Endothelial cell of umbilical vein (primary cell): ENCODE measurements at regions of chr3 and their contacts with region 1.

Region 1: GRCh38 chr3:159260049-159260662 is 458.3 kb downstream of the MFSD1 start:
- DNase-seq: peak; percentile 65
- H3K4me3 ChIP-seq: no peak overlapping the region
- H3K27ac ChIP-seq: no peak overlapping the region
- H3K4me1 ChIP-seq: no peaks in the 10 kb centered on the region
- H3K27me3 ChIP-seq: peaks cover 2 to 21% of the 10 kb centered on the region in 2 experiments
- CTCF ChIP-seq: peak; percentile 42 to 43
- POLR2A ChIP-seq: no peak

Region 2: DNA sequence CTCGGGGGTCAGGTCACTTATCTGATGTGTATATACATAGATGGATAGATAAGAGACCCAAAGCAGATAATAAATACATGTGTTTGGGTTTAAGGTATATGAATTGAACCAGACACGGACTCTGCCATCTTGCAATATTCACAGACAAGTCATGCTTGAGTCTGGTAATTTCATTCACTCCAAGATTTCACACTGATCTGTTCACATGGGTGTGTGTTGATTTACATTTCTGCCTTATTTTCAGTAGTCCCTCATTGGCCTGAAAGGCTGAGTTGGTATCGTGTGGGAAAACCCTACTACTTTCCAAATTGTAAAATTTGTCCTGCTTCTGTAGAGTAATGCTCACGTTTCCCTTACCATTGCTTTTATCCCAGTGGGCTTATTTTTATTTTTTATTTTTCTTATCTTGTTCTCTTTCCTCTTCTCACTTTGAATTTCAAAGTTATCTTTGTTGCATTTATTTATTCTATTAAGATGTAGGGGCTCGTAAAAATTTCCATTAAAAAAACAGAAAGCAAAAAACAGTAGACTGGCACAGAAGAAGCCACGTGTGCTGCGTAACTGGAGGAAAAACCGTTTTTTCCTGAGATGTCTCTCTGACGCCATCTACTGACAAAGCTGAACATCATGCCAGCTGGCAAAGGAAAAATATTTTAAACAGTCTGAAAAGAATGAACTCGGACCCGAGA is 469.1 kb before region 1 on chr3:
- CTCF ChIA-PET with region 1: interaction called, 96 read pairs
- POLR2A ChIA-PET with region 1: no interaction called
- dilution Hi-C with region 1: no loop called
- intact Hi-C with region 1: loop called (anchors 1 kb)
- DNase-seq: peak; percentile 71
- H3K4me3 ChIP-seq: peak overlapping the region in 1 of 3 experiments; percentile 3
- H3K27ac ChIP-seq: no peak overlapping the region
- H3K4me1 ChIP-seq: peaks cover 8% of the 10 kb centered on the region
- H3K27me3 ChIP-seq: no peaks in the 10 kb centered on the region
- CTCF ChIP-seq: peak; percentile 67 to 72
- POLR2A ChIP-seq: no peak

Region 3: DNA sequence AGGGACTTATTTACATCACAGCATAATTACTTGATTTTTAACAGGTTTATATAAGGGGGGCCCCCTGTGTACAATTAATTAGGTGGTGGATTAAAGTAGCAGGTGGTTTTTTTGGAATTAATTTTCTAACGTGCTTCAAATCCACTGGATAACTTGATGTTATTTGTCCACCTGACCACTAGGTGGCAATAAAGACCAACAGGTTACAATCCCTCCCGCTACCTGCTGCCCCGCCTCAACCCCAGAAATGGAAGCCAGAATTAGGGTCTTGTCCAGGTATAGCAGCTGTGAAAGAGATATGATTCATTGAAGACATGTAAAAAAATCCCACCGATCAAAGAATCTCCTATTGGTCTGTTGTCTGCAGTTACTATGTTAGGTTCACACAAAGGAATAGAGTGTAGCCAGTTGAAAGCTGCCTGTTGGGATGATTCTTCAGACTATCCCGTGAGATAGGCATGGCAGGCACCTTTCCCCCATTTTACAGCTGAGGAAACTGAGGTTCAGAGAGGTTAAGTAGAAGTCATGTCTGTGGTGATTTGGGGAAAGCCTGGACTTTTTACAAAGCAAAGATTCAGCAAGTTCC is 414.3 kb before region 1 on chr3:
- CTCF ChIA-PET with region 1: interaction called, 249 read pairs
- POLR2A ChIA-PET with region 1: no interaction called
- dilution Hi-C with region 1: no loop called
- intact Hi-C with region 1: loop called (anchors 1 kb)
- DNase-seq: peak; percentile 30
- H3K4me3 ChIP-seq: no peak overlapping the region
- H3K27ac ChIP-seq: no peak overlapping the region
- H3K4me1 ChIP-seq: no peaks in the 10 kb centered on the region
- H3K27me3 ChIP-seq: no peaks in the 10 kb centered on the region
- CTCF ChIP-seq: peak; percentile 49 to 60
- POLR2A ChIP-seq: no peak

Region 4: DNA sequence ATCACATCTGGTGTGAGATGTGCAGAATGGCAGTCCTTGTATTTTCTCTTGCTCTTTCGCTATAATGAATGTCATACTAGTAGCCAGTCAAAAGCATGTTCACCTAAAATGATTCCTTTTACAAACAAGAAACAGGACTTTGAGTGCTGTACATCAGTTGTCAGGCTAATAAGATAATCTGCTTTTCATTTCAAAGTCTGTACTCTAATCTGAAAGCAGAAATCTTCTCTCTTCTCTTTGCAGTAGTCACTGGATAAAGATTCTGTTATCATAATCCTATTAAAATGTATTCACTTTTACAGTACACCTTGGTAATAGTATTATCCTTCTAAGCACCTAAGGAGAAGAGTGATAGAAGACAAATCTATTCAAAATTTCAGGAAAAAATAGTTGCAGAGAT is 158.2 kb before region 1 on chr3:
- CTCF ChIA-PET with region 1: no interaction called
- POLR2A ChIA-PET with region 1: no interaction called
- dilution Hi-C with region 1: no loop called
- intact Hi-C with region 1: no loop called
- DNase-seq: no peak
- H3K4me3 ChIP-seq: no peak overlapping the region
- H3K27ac ChIP-seq: no peak overlapping the region
- H3K4me1 ChIP-seq: no peaks in the 10 kb centered on the region
- H3K27me3 ChIP-seq: no peaks in the 10 kb centered on the region
- CTCF ChIP-seq: no peak
- POLR2A ChIP-seq: no peak

Region 5: DNA sequence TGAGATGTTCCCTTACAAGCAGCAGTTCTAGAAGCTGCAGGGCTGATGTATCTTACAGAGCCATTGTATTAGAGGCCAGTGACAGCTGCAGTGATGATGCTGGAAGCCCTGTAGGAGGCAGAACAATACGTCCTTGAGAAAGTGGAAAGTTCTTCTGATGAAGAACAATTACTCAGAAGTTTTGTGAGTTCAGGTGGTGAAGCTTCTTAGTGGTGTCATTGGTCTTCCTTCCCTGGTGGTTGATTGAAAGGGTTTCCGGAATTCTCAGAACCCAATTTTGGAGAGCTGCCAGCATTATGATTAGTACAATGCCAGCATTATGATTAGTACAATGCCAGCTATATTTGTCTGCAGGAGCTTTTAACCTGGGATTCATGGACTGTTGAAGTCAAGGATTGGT is 101.9 kb before region 1 on chr3:
- CTCF ChIA-PET with region 1: interaction called, 11 read pairs
- POLR2A ChIA-PET with region 1: no interaction called
- dilution Hi-C with region 1: no loop called
- intact Hi-C with region 1: no loop called
- DNase-seq: peak; percentile 88
- H3K4me3 ChIP-seq: no peak overlapping the region
- H3K27ac ChIP-seq: peak overlapping the region; percentile 48
- H3K4me1 ChIP-seq: peaks cover 15% of the 10 kb centered on the region
- H3K27me3 ChIP-seq: no peaks in the 10 kb centered on the region
- CTCF ChIP-seq: peak; percentile 30 to 42
- POLR2A ChIP-seq: no peak

Region 6: DNA sequence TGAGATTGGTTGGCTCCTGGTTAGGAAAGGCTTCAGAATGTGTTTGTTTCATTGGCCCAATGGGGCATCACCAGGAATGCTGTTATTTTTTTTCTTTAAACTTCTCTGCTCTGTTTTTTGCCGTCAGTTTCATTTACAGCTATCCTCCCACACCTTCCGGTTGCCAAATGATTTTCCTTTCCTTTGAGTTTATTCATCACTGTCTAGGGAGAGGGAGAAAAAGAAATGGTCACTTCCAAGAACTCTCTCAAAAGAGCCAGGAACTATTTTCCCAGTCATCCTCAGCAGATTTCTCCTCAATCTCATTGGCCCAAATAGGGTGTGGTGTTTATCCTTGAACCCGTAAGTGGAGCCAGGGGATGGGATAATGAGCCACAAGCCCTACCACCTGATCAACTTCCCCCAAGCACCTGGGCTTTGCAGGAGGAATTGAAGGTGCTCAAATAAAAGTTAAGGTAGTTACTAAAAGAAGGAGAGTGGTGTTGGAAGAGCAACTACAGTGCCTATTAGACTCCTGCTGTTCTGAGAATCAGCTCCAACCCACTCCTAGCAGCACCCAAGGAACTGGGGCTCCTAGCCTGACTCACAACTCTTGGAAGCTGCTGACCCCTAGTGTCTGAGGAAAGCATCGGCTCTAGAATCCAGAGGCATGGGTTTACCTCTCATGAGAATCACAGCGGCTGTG is 544.7 kb after region 1 on chr3:
- CTCF ChIA-PET with region 1: interaction called, 46 read pairs
- POLR2A ChIA-PET with region 1: no interaction called
- dilution Hi-C with region 1: no loop called
- intact Hi-C with region 1: no loop called
- DNase-seq: peak; percentile 85
- H3K4me3 ChIP-seq: no peak overlapping the region
- H3K27ac ChIP-seq: peak overlapping the region; percentile 19
- H3K4me1 ChIP-seq: peaks cover 18% of the 10 kb centered on the region
- H3K27me3 ChIP-seq: no peaks in the 10 kb centered on the region
- CTCF ChIP-seq: peak; percentile 92 to 96
- POLR2A ChIP-seq: no peak

Region 7: GRCh38 chr3:160343132-160343531 is 1083.0 kb after region 1 on chr3:
- CTCF ChIA-PET with region 1: no interaction called
- POLR2A ChIA-PET with region 1: no interaction called
- dilution Hi-C with region 1: no loop called
- intact Hi-C with region 1: loop called (anchors 10 kb)
- DNase-seq: peak; percentile 23
- H3K4me3 ChIP-seq: no peak overlapping the region
- H3K27ac ChIP-seq: no peak overlapping the region
- H3K4me1 ChIP-seq: no peaks in the 10 kb centered on the region
- H3K27me3 ChIP-seq: no peaks in the 10 kb centered on the region
- CTCF ChIP-seq: peak in 1 of 2 donors; percentile 9
- POLR2A ChIP-seq: no peak